Activated naive CD4-positive, alpha-beta T cell treated with anti-CD3 and anti-CD28 coated beads for 36 hours (primary cell): ENCODE measurements at regions of chr19 and their contacts with region 1.

Region 1: DNA sequence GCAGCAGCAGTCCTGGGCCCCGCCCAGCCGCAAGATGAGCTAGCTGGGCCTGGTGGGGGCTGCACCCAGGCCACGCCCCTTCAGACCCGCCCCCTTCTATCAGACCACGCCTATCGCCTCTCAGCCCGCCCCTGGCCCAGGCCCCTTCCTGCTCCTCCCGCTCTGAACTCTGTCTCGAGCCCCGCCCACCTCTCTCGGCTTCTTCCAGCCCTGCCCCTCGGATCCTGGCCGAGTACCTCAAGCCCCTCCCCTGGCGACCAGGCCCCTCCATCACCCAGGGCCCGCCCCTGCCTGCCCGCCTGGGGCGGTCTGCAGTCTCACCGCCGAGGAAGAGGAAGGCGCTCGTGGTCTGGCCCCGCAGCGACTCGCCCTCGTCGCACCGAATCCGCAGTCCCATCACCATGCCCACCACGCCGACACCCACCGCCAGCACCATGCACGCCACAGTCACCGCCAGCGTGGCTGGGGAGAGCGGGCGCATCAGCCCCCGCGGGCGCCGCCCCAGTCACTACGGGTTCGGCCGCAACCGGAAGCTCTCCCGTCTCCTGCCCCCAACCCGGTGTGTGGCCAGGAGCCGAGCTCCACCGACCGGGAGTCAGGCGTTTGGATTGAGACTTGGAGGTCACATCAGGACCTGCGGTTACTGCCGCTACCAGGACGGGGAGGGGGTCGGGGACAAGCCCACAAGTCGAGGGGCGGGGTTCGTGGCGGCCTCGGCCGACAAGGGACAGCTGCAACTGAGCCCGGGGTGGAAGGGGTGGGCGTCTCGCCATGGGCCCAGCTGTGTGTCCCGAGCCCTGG is 1.0 kb downstream of the CLDND2 start:
- DNase-seq: peak; percentile 99
- H3K4me3 Mint-ChIP-seq: peak overlapping the region; percentile 94
- H3K27ac Mint-ChIP-seq: peak overlapping the region; percentile 95
- H3K4me1 Mint-ChIP-seq: peaks cover 58% of the 10 kb centered on the region
- H3K27me3 Mint-ChIP-seq: no peaks in the 10 kb centered on the region

Region 2: DNA sequence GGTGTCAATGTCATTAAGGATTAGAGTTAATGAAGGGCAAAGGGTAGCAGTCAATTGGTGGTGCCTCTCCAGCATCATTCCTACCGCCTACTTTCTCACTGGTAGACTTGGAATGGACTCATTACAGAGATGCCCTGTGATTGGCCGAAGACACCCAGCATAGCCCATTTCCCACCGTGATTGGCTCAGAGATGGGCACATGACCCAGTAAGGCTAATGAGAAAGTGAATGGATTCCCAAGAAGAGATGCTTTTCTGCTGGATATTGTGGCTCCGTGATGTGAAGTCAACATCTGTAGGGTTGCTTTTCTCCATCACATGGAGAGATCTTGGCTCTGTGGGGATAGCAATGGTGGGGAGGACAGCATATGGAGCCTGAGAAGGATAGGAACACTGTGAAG is 37.4 kb before region 1 on chr19:
- CTCF ChIA-PET with region 1: no interaction called
- intact Hi-C with region 1: no loop called
- DNase-seq: no peak
- H3K4me3 Mint-ChIP-seq: no peak overlapping the region
- H3K27ac Mint-ChIP-seq: no peak overlapping the region
- H3K4me1 Mint-ChIP-seq: peaks cover 5% of the 10 kb centered on the region
- H3K27me3 Mint-ChIP-seq: peaks cover 47% of the 10 kb centered on the region

Region 3: DNA sequence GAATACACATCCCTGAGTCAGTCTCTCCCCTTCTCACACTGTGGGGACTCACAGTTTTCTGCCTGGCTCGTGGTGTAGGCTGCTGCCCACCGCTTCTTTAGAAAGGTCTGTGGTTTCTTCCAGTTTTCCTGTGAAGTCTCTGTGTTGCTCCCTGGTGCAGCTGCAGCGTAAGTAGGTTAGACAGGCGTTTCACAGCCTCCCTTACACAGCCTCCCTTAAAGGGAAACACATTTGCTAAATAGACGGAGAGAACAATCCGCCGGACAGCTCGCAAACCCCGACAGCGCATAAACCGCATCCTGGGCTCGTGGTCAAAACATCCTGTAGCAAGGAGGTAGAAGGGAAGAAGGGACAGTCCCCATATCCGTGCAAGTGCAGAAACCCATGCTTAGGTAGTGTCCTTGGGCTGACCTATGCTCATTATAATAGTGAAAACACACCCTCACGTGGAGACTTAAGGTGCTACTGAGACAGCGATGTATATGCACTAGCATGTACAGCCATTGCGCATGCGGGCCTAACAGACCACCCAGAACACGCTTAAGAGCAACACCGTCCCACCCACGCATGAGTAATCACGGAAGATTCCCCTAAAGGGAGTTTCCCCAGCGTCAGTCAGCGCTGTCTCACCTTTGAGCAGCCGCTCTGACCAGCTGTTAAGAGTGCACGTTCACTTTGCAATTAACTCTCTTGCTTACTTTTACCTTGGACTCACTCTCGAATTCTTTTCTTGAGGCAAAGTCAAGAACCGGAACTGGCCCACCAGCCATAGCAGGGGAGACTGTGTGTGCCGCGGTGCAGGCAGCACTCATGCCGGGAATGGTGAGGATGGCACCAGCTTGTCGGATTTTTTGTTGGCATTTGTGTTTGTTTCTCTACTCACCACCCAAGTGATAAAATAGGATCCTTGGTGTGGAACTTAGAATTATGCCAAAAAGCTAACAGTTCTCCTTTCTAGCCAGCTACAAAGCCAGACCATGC is 73.9 kb after region 1 on chr19:
- CTCF ChIA-PET with region 1: no interaction called
- intact Hi-C with region 1: loop called (anchors 1 kb)
- DNase-seq: peak; percentile 95
- H3K4me3 Mint-ChIP-seq: peak overlapping the region; percentile 62
- H3K27ac Mint-ChIP-seq: peak overlapping the region; percentile 87
- H3K4me1 Mint-ChIP-seq: peaks cover 43% of the 10 kb centered on the region
- H3K27me3 Mint-ChIP-seq: peaks cover 4% of the 10 kb centered on the region